ENCODE measurements at regions of chr11 and their contacts with region 1.

Region 1: DNA sequence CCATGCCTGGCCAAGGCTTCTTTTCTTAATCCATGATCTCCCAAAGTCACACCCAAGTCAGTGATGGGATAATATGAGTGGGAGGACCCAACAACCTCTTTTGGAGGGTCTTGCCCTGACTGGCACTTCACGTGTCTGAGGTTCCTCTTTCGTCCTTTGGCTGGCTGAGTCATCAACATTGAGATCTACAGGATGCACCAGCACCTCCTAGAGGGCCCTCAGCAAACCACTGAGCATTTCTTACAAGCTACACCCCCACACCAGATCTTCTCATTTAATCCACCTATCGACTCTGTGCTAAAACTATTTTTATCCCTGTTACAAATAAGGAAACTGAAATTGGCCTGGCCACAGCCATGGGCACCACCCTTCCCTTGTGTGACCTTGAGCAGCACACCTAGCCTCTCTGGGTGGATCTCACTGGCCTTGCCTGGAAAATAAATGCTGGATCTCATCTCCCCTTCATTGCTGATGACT is 63.4 kb downstream of the FLI1 start:
- DNase-seq: peak; percentile 55
- H3K4me3 Mint-ChIP-seq: peak overlapping the region; percentile 63
- H3K27ac Mint-ChIP-seq: peak overlapping the region; percentile 95
- H3K4me1 Mint-ChIP-seq: peaks cover 68% of the 10 kb centered on the region
- H3K27me3 Mint-ChIP-seq: no peaks in the 10 kb centered on the region

Region 2: GRCh38 chr11:128624269-128625175 is 132.8 kb before region 1 on chr11:
- intact Hi-C with region 1: no loop called
- DNase-seq: peak; percentile 54
- H3K4me3 Mint-ChIP-seq: peak overlapping the region; percentile 75
- H3K27ac Mint-ChIP-seq: peak overlapping the region; percentile 97
- H3K4me1 Mint-ChIP-seq: peaks cover 94% of the 10 kb centered on the region
- H3K27me3 Mint-ChIP-seq: no peaks in the 10 kb centered on the region

Region 3: GRCh38 chr11:128776424-128777284 is 19.4 kb after region 1 on chr11:
- intact Hi-C with region 1: loop called (anchors 2 kb)
- DNase-seq: no peak
- H3K4me3 Mint-ChIP-seq: no peak overlapping the region
- H3K27ac Mint-ChIP-seq: peak overlapping the region; percentile 45
- H3K4me1 Mint-ChIP-seq: peaks cover 40% of the 10 kb centered on the region
- H3K27me3 Mint-ChIP-seq: no peaks in the 10 kb centered on the region

Measured in activated T-helper 1 cell treated with anti-CD3 and anti-CD28 coated beads, Interleukin-12 subunit alpha, Interleukin-12 subunit beta, Interleukin-2, Interleukin-4 antibody, amounts not matched to agents 30 ng/mL and 10 ng/mL and 1 ng/mL, durations not matched to agents 14 hours and 24 hours and 36 hours (primary cell).